Panc1 (cell line): ENCODE measurements at regions of chr17 and their contacts with region 1.

Region 1: DNA sequence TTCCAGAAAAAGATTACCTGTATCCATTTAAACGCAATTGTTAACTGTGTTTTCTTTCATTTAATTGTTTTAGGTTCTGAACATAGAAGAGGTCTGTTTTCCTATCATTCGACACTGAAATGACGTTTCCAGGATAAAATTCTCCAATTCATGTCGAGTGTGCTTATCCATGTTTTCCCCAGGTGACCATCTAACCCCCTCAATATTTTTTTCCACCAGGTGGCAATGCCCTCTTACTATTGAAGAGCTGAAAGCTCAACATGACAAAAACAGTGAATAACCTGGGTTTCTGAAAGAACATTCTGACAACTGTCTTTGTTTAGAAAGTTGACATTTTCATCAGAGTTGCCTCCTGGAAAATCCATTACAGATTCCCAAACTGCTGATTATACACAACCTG is 948.7 kb downstream of the KCNJ2 start:
- DNase-seq: no peak
- ATAC-seq: no peak
- H3K4me3 ChIP-seq: no peak overlapping the region
- H3K27ac ChIP-seq: no peak overlapping the region
- H3K4me1 ChIP-seq: no peaks in the 10 kb centered on the region
- H3K27me3 ChIP-seq: no peaks in the 10 kb centered on the region; the same call in 1 of the 2 replicates
- CTCF ChIP-seq: peak; percentile 42; the same call in 1 of the 2 replicates

Region 2: DNA sequence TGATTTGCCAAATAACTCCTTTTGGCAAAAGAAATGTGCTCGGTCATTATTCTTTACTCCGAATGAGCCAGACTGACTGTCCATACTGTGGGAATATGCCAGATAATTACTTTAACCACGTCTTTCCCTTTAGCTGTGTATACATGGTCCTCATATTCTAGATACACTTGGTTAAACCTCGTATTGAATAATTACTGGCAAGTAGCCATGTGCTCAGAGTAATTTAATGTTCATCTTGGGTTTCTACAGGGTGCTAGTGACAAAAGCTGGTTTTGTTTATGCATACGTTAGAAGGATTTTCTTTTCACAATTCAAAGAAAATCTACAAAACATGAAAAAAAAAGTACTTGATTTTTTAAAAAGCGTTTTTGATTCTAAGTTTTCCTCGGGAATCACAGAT is 408.4 kb before region 1 on chr17:
- CTCF ChIA-PET with region 1: no interaction called
- POLR2A ChIA-PET with region 1: no interaction called
- in situ Hi-C with region 1: no loop called
- intact Hi-C with region 1: no loop called
- DNase-seq: no peak
- ATAC-seq: no peak
- H3K4me3 ChIP-seq: no peak overlapping the region
- H3K27ac ChIP-seq: no peak overlapping the region
- H3K4me1 ChIP-seq: 0 out of 2 replicates have a peak, but pooled peaks cover 3% of the 10 kb centered on the region
- H3K27me3 ChIP-seq: peaks cover 3% of the 10 kb centered on the region; the same call in 1 of the 2 replicates
- CTCF ChIP-seq: no peak

Region 3: GRCh38 chr17:71099003-71099714 is 18.9 kb before region 1 on chr17:
- CTCF ChIA-PET with region 1: no interaction called
- POLR2A ChIA-PET with region 1: no interaction called
- in situ Hi-C with region 1: no loop called
- intact Hi-C with region 1: loop called (anchors 2 kb)
- DNase-seq: no peak
- ATAC-seq: no peak
- H3K4me3 ChIP-seq: no peak overlapping the region
- H3K27ac ChIP-seq: no peak overlapping the region
- H3K4me1 ChIP-seq: no peaks in the 10 kb centered on the region
- H3K27me3 ChIP-seq: no peaks in the 10 kb centered on the region
- CTCF ChIP-seq: no peak

Region 4: DNA sequence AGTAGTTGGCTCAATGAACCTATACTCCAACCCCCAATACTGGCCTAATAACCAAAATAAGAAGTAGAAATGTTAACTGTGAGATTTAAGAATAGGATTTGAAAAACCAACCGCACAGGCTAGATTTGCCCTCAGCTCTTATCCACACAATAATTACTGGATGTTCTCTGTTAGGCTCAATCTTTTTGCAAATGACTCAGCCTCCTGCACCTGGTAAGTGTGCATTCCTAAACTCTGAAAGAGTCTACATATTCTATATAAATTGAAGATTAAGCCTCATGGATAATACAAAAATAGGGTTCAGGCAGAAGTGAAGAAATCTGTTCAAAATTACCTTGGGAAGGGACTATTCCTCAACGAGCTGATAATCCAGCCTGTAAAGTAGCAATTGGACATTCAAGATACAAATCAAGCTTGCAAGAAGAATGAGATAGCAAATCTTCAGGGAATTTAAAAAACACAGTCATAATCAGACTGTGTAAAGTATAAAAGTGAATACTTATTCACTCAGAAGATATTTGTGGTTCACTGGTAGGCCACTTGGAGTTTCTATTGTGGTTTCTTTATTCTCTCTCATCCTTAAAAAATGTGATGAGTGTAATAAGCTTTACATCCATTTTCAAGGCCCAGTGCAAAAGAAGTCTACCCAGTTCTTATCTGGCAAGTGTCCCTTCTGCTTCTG is 70.9 kb after region 1 on chr17:
- CTCF ChIA-PET with region 1: no interaction called
- POLR2A ChIA-PET with region 1: no interaction called
- in situ Hi-C with region 1: no loop called
- intact Hi-C with region 1: no loop called
- DNase-seq: peak; percentile 25
- ATAC-seq: no peak
- H3K4me3 ChIP-seq: no peak overlapping the region
- H3K27ac ChIP-seq: no peak overlapping the region
- H3K4me1 ChIP-seq: no peaks in the 10 kb centered on the region
- H3K27me3 ChIP-seq: no peaks in the 10 kb centered on the region
- CTCF ChIP-seq: no peak

Region 5: DNA sequence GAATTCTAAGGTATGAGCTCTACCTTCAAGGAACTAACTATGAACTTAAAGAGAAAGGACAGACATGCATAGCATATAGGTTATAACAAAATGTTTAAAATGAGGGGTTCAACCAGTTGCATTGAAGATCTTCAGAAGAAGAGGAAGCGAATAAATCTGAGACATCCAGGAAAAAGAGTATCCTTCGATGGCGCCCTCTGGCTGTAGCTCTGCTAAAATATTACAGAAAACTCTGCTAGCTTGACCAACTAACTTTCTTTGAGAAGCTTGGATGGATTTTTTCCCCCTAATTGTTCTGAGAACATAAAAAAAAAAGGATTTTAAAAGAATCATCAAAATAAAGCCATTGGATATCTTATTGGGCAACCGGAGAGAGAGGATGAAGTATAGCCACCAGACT is 342.9 kb after region 1 on chr17:
- CTCF ChIA-PET with region 1: no interaction called
- POLR2A ChIA-PET with region 1: no interaction called
- in situ Hi-C with region 1: no loop called
- intact Hi-C with region 1: loop called (anchors 10 kb)
- DNase-seq: no peak
- ATAC-seq: no peak
- H3K4me3 ChIP-seq: no peak overlapping the region
- H3K27ac ChIP-seq: no peak overlapping the region
- H3K4me1 ChIP-seq: no peaks in the 10 kb centered on the region
- H3K27me3 ChIP-seq: no peaks in the 10 kb centered on the region
- CTCF ChIP-seq: peak; percentile 54; the same call in 1 of the 2 replicates